Heart right ventricle (tissue), 16 donors: ENCODE measurements at regions of chr1 and their contacts with region 1.

Region 1: GRCh38 chr1:154434346-154435085 is 29.4 kb downstream of the IL6R start:
- DNase-seq: peak; percentile 75 to 86
- ATAC-seq: peak; percentile 76 to 92 (median 88)
- H3K4me3 ChIP-seq: peak overlapping the region in 8 of 10 donors; percentile 2 to 44 (median 25)
- H3K27ac ChIP-seq: peak overlapping the region; percentile 5 to 91 (median 82)
- H3K4me1 ChIP-seq: peaks cover 6 to 71% (median 43%) of the 10 kb centered on the region in 9 donors
- H3K27me3 ChIP-seq: no peaks in the 10 kb centered on the region
- CTCF ChIP-seq: no peak

Region 2: GRCh38 chr1:154104433-154105082 is 330.0 kb before region 1 on chr1:
- intact Hi-C with region 1: no loop called
- DNase-seq: no peak
- ATAC-seq: no peak
- H3K4me3 ChIP-seq: no peak overlapping the region
- H3K27ac ChIP-seq: no peak overlapping the region
- H3K4me1 ChIP-seq: no peaks in the 10 kb centered on the region
- H3K27me3 ChIP-seq: no peaks in the 10 kb centered on the region
- CTCF ChIP-seq: no peak

Region 3: GRCh38 chr1:154553056-154554030 is 118.8 kb after region 1 on chr1:
- intact Hi-C with region 1: loop called in 1 of 10 experiments (anchors 5 kb)
- DNase-seq: no peak
- ATAC-seq: no peak
- H3K4me3 ChIP-seq: no peak overlapping the region
- H3K27ac ChIP-seq: no peak overlapping the region
- H3K4me1 ChIP-seq: peaks cover 13 to 48% (median 35%) of the 10 kb centered on the region in 9 donors
- H3K27me3 ChIP-seq: no peaks in the 10 kb centered on the region
- CTCF ChIP-seq: no peak